ENCODE measurements at regions of chr12 and their contacts with region 1.

Region 1: GRCh38 chr12:1117970-1118563 is 127.0 kb downstream of the ERC1 start:
- DNase-seq: peak; percentile 81
- ATAC-seq: peak; percentile 43
- H3K4me3 Mint-ChIP-seq: no peak overlapping the region
- H3K27ac Mint-ChIP-seq: no peak overlapping the region
- H3K4me1 Mint-ChIP-seq: peaks cover 13% of the 10 kb centered on the region
- H3K27me3 Mint-ChIP-seq: no peaks in the 10 kb centered on the region

Region 2: DNA sequence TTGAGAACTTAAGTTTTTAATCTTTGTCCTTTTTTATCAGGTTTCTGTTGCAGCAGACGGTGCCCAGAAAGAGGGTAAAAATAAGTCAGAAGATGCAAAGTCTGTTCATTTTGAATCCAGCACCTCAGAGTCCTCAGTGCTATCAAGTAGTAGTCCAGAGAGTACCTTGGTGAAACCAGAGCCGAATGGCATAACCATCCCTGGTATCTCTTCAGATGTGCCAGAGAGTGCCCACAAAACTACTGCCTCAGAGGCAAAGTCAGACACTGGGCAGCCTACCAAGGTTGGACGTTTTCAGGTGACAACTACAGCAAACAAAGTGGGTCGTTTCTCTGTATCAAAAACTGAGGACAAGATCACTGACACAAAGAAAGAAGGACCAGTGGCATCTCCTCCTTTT is 222.0 kb before region 1 on chr12:
- CTCF ChIA-PET with region 1: no interaction called
- POLR2A ChIA-PET with region 1: no interaction called
- DNase-seq: no peak
- ATAC-seq: no peak
- H3K4me3 Mint-ChIP-seq: no peak overlapping the region
- H3K27ac Mint-ChIP-seq: no peak overlapping the region
- H3K4me1 Mint-ChIP-seq: no peaks in the 10 kb centered on the region
- H3K27me3 Mint-ChIP-seq: no peaks in the 10 kb centered on the region

Region 3: GRCh38 chr12:1083889-1084262 is 34.2 kb before region 1 on chr12:
- CTCF ChIA-PET with region 1: no interaction called
- POLR2A ChIA-PET with region 1: no interaction called
- DNase-seq: no peak
- ATAC-seq: no peak
- H3K4me3 Mint-ChIP-seq: no peak overlapping the region
- H3K27ac Mint-ChIP-seq: no peak overlapping the region
- H3K4me1 Mint-ChIP-seq: no peaks in the 10 kb centered on the region
- H3K27me3 Mint-ChIP-seq: no peaks in the 10 kb centered on the region

Region 4: DNA sequence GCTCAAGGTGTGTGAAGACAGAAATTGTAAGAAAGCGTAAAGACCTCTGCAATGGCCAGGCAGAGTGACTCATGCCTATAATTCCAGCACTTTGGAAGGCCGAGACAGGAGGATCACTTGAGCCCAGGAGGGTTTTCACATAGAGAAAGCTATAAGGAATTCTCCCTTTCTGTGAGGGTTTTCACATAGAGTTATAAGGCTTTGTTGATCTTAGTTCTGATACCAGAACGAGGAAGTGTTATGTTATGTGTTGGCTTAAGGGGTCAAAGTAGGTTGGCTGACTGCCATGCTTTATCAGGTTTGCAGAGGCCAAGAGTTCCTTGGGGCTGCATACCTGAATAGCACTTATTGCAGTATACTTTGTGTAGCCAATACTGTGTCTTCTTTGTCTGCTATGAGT is 12.1 kb after region 1 on chr12:
- CTCF ChIA-PET with region 1: interaction called, 43 read pairs
- POLR2A ChIA-PET with region 1: no interaction called
- DNase-seq: no peak
- ATAC-seq: no peak
- H3K4me3 Mint-ChIP-seq: no peak overlapping the region
- H3K27ac Mint-ChIP-seq: no peak overlapping the region
- H3K4me1 Mint-ChIP-seq: peaks cover 25% of the 10 kb centered on the region
- H3K27me3 Mint-ChIP-seq: no peaks in the 10 kb centered on the region

Region 5: GRCh38 chr12:1272142-1272541 is 154.1 kb after region 1 on chr12:
- CTCF ChIA-PET with region 1: interaction called, 10 read pairs
- POLR2A ChIA-PET with region 1: no interaction called
- DNase-seq: no peak
- ATAC-seq: peak; percentile 44
- H3K4me3 Mint-ChIP-seq: no peak overlapping the region
- H3K27ac Mint-ChIP-seq: no peak overlapping the region
- H3K4me1 Mint-ChIP-seq: peaks cover 17% of the 10 kb centered on the region
- H3K27me3 Mint-ChIP-seq: no peaks in the 10 kb centered on the region

Region 6: DNA sequence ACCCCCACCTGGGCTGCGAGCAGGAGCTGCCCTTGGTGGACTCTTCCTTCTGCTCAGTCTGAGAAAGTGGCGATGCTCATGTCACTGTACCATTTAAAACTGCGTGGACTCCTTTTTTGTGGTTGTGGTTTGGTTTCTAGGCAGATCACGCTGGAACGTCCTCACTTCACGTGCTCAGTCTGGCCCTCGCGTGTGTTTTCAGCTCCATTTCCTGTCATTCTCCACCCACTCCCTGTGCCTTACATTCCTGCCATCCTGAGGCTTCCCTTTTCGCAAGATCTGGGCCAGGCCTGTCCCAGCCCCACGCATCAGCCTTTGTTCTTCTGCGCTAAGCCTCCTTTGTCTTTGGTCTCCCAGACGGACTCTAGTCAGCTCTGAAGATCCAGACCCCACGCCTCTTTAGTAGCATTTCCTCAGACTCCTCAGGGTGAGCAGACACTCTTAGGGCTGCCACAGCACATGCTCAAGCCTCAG is 370.9 kb after region 1 on chr12:
- CTCF ChIA-PET with region 1: interaction called, 10 read pairs
- POLR2A ChIA-PET with region 1: no interaction called
- DNase-seq: peak; percentile 36
- ATAC-seq: peak; percentile 55
- H3K4me3 Mint-ChIP-seq: no peak overlapping the region
- H3K27ac Mint-ChIP-seq: peak overlapping the region; percentile 1
- H3K4me1 Mint-ChIP-seq: peaks cover 13% of the 10 kb centered on the region
- H3K27me3 Mint-ChIP-seq: no peaks in the 10 kb centered on the region

Region 7: GRCh38 chr12:1559676-1560091 is 441.6 kb after region 1 on chr12:
- CTCF ChIA-PET with region 1: interaction called, 17 read pairs
- POLR2A ChIA-PET with region 1: no interaction called
- DNase-seq: no peak
- ATAC-seq: no peak
- H3K4me3 Mint-ChIP-seq: no peak overlapping the region
- H3K27ac Mint-ChIP-seq: no peak overlapping the region
- H3K4me1 Mint-ChIP-seq: no peaks in the 10 kb centered on the region
- H3K27me3 Mint-ChIP-seq: peaks cover 14% of the 10 kb centered on the region

Region 8: DNA sequence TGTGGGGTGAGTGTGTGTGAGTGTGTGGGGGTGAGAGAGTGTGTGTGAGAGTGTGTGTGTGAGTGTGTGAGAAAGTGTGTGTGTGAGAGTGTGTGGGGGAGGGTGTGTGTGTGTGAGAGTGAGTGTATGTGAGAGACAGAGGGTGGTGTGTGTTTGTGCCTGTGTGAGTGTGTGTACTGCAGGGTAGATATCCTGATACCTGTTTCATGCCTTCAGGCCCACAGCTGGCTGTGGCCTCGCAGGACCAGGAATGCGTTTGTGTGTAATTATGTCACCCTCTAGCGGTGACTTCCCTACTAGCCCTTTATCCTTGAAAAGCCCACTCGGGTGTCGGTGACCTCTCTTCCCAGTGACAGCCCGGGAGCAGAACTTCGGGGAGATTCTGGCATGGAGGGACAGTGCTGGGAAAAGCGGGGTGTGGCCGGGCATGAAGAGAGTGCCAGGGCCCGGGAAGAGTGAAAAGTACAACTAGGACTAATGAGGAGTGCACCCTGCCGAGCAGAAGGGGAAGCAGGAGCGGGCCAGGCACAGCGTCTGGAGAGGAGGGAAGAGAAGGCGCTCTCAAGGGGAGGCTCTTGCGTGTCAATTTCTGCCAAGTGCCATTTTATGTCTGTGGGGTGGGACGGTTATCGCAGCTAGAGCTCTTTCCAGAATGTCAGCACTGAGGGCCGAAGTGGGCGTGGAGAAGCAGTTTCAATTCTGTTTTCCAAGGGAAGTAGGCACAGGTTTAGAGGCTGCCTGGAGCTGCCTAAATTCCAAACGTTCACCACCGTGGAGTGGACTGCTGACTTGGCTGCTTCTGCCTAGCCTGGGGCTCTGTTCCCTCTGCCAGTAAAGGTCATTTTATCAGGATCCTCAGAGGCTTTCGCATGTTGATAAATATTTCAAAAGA is 487.3 kb after region 1 on chr12:
- CTCF ChIA-PET with region 1: interaction called, 56 read pairs
- POLR2A ChIA-PET with region 1: interaction called, 3 read pairs
- DNase-seq: peak; percentile 74
- ATAC-seq: peak; percentile 76
- H3K4me3 Mint-ChIP-seq: peak overlapping the region; percentile 72
- H3K27ac Mint-ChIP-seq: peak overlapping the region; percentile 29
- H3K4me1 Mint-ChIP-seq: peaks cover 45% of the 10 kb centered on the region
- H3K27me3 Mint-ChIP-seq: peaks cover 8% of the 10 kb centered on the region

Measured in activated CD8-positive, alpha-beta T cell treated with anti-CD3 and anti-CD28 coated beads, Interleukin-2, amount 10 ng/mL, durations not matched to agents 7 days and 5 days (primary cell).